Body of pancreas (tissue), 4 donors: ENCODE measurements at regions of chr18 and their contacts with region 1.

Region 1: DNA sequence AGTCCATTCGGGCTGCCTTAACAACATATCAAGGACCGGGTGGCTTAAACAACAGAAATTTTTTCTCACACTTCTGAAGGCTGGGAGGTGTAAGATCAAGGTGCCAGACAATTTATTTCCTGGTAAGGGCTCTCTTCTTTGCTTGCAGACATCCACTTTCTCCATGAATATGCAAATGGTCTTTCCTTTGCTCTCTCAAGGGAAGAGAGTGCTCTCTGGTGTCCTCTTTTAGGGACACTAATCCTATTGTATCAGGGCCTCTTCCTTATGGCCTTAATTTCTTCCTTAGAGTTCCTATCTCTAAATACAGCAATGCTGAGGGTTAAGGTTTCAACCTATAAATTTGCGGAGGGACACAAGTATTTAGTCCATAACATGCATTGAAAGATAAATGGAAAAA is 770.8 kb downstream of the DSC3 start:
- DNase-seq: no peak
- ATAC-seq: no peak
- H3K4me3 ChIP-seq: no peak overlapping the region
- H3K27ac ChIP-seq: no peak overlapping the region
- H3K4me1 ChIP-seq: no peaks in the 10 kb centered on the region
- H3K27me3 ChIP-seq: no peaks in the 10 kb centered on the region
- CTCF ChIP-seq: no peak
- POLR2A ChIP-seq: no peak

Region 2: GRCh38 chr18:29874519-29875098 is 397.1 kb before region 1 on chr18:
- intact Hi-C with region 1: loop called (anchors 10 kb)
- DNase-seq: peak in 1 of 4 donors; percentile 4
- ATAC-seq: no peak
- H3K4me3 ChIP-seq: no peak overlapping the region
- H3K27ac ChIP-seq: no peak overlapping the region
- H3K4me1 ChIP-seq: no peaks in the 10 kb centered on the region
- H3K27me3 ChIP-seq: no peaks in the 10 kb centered on the region
- CTCF ChIP-seq: peak in 6 of 7 experiments; percentile 28 to 58 (median 46)
- POLR2A ChIP-seq: no peak

Region 3: GRCh38 chr18:30081122-30081521 is 190.6 kb before region 1 on chr18:
- intact Hi-C with region 1: no loop called
- DNase-seq: no peak
- ATAC-seq: no peak
- H3K4me3 ChIP-seq: no peak overlapping the region
- H3K27ac ChIP-seq: no peak overlapping the region
- H3K4me1 ChIP-seq: no peaks in the 10 kb centered on the region
- H3K27me3 ChIP-seq: no peaks in the 10 kb centered on the region
- CTCF ChIP-seq: no peak
- POLR2A ChIP-seq: no peak

Region 4: DNA sequence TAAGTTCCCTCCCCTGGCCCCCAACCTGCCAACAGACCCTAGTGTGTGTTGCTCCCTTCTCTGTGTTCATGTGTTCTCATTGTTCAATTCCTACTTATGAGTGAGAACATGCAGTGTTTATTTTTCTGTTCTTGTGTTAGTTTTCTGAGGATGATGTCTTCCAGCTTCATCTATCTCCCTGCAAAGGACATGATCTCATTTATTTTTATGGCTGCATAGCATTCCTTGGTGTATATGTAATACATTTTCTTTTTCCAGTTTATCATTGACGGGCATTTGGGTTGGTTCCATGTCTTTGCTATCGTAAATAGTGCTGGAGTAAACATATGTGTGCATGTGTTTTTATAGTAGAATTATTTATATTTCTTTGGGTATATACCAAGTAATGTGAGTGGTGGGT is 168.6 kb after region 1 on chr18:
- intact Hi-C with region 1: no loop called
- DNase-seq: no peak
- ATAC-seq: no peak
- H3K4me3 ChIP-seq: no peak overlapping the region
- H3K27ac ChIP-seq: no peak overlapping the region
- H3K4me1 ChIP-seq: no peaks in the 10 kb centered on the region
- H3K27me3 ChIP-seq: no peaks in the 10 kb centered on the region
- CTCF ChIP-seq: no peak
- POLR2A ChIP-seq: no peak